ENCODE measurements at regions of chr12 and their contacts with region 1.

Region 1: GRCh38 chr12:47963340-47964040 is at the start of gene TMEM106C:
- DNase-seq: peak; percentile 82
- ATAC-seq: peak; percentile 96
- H3K4me3 ChIP-seq: peak within 1 kb of the TSS; percentile 66 to 87 (median 78)
- H3K27ac ChIP-seq: no peak within 1 kb of the TSS
- H3K4me1 ChIP-seq: peaks cover 18% of the 10 kb centered on the region
- H3K27me3 ChIP-seq: peaks cover 4 to 20% of the 10 kb centered on the region in 2 experiments; a peak in 4 of 5 replicates
- CTCF ChIP-seq: peak; percentile 98
- EP300 ChIP-seq: no peak
- POLR2A ChIP-seq: peak; percentile 38 to 63; a peak in 3 of 4 replicates
- RAD21 ChIP-seq: peak; percentile 92
- total RNA-seq, gene TMEM106C: 132 and 134 TPM in 2 replicates

Region 2: DNA sequence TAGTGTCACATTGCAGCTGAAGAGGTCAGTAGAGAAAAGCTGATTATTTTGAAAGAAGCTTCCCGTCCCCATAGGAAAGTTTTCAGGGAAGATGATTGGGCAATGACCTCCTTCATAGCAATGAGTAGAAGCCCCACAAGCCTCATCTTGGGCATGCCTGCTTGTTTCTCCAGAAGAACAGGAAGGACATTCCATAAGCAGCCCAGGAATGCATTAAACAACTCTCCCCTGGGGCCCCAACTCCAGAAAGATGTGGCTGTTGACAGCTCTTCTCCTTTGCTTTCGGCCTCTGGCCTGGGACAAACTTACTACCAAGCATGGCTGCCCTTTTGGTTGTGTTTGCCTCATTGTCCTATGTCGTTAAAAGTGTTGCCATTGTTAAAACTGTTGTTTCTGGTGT is 53.0 kb before region 1 on chr12:
- CTCF ChIA-PET with region 1: interaction called, 3 read pairs
- POLR2A ChIA-PET with region 1: no interaction called
- in situ Hi-C with region 1: no loop called
- intact Hi-C with region 1: loop called (anchors 2 kb)
- DNase-seq: no peak
- ATAC-seq: 0 out of 3 replicates have a peak, but pooled peaks have one; percentile 7
- H3K4me3 ChIP-seq: no peak overlapping the region; a peak in 1 of 6 replicates
- H3K27ac ChIP-seq: peak overlapping the region; percentile 22
- H3K4me1 ChIP-seq: peaks cover 57% of the 10 kb centered on the region
- H3K27me3 ChIP-seq: peaks cover 0 to 6% of the 10 kb centered on the region in 2 experiments; a peak in 2 of 5 replicates
- CTCF ChIP-seq: no peak
- EP300 ChIP-seq: no peak
- POLR2A ChIP-seq: no peak
- RAD21 ChIP-seq: no peak

Region 3: GRCh38 chr12:47973870-47974269 is 10.4 kb after region 1 on chr12:
- CTCF ChIA-PET with region 1: no interaction called
- POLR2A ChIA-PET with region 1: no interaction called
- in situ Hi-C with region 1: no loop called
- intact Hi-C with region 1: no loop called
- DNase-seq: no peak
- ATAC-seq: no peak
- H3K4me3 ChIP-seq: no peak overlapping the region
- H3K27ac ChIP-seq: no peak overlapping the region
- H3K4me1 ChIP-seq: peaks cover 12% of the 10 kb centered on the region
- H3K27me3 ChIP-seq: no peaks in the 10 kb centered on the region
- CTCF ChIP-seq: no peak
- EP300 ChIP-seq: no peak
- POLR2A ChIP-seq: no peak
- RAD21 ChIP-seq: no peak

Region 4: DNA sequence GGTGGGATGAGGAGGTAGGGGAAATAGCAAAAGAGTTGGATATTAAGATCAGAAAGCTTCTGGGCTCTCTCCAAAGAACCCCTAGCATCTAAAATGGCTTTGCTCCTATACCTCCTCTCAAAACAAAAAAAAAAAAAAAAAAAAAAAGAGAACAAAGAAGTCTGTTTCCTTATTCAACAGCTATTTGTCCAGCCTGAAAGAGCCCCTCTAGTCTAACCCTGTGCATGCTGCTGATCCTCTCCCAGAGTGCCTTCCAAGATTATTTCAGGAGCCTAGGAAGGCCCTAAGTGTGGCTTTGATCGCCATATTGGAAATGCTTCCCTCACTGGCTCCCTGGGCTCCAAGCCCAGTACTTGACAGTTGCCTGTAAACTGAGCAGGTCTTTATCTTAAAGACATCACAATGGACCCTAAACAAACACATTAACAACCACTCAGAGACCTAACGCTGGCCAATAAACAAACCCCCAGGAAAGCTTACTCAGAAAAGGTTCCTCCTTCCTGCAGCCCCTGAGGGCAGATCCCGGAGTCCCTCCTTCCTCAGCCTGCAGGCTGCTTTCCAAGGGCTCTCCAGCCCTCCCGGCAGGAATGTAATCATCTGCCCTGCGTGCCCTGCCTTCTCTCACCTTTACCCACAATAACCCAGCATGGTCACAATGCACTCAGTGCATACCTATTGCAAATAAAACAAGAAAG is 58.1 kb after region 1 on chr12:
- CTCF ChIA-PET with region 1: no interaction called
- POLR2A ChIA-PET with region 1: no interaction called
- in situ Hi-C with region 1: no loop called
- intact Hi-C with region 1: loop called (anchors 10 kb)
- DNase-seq: no peak
- ATAC-seq: no peak; the same call in 2 of the 3 replicates
- H3K4me3 ChIP-seq: no peak overlapping the region
- H3K27ac ChIP-seq: no peak overlapping the region
- H3K4me1 ChIP-seq: peaks cover 74% of the 10 kb centered on the region
- H3K27me3 ChIP-seq: peaks cover 2 to 3% of the 10 kb centered on the region in 2 experiments; a peak in 1 of 5 replicates
- CTCF ChIP-seq: no peak
- EP300 ChIP-seq: no peak
- POLR2A ChIP-seq: no peak
- RAD21 ChIP-seq: no peak

Region 5: DNA sequence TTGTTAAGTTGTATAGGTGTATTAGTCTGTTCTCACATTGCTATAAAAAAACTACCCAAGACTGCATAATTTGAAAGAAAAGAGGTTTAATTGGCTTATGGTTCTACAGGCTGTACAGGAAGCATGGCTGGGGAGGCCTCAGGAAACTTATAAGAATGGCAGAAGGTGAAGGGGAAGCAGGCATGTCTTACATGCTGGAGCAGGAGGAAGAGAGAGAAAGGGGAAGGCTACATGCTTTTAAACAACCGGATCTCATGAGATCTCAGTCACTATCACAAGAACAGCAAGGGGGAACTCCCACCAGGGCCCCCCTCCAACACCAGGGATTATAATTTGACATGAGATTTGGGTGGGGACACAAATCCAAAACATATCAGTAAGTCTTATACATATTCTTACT is 300.1 kb after region 1 on chr12:
- CTCF ChIA-PET with region 1: no interaction called
- POLR2A ChIA-PET with region 1: no interaction called
- in situ Hi-C with region 1: no loop called
- intact Hi-C with region 1: no loop called
- DNase-seq: no peak
- ATAC-seq: no peak
- H3K4me3 ChIP-seq: no peak overlapping the region
- H3K27ac ChIP-seq: no peak overlapping the region
- H3K4me1 ChIP-seq: no peaks in the 10 kb centered on the region
- H3K27me3 ChIP-seq: no peaks in the 10 kb centered on the region
- CTCF ChIP-seq: no peak
- EP300 ChIP-seq: no peak
- POLR2A ChIP-seq: no peak
- RAD21 ChIP-seq: no peak

Measured in HepG2 (cell line).